Kidney (tissue), 22 donors: ENCODE measurements at regions of chr16 and their contacts with region 1.

Region 1: DNA sequence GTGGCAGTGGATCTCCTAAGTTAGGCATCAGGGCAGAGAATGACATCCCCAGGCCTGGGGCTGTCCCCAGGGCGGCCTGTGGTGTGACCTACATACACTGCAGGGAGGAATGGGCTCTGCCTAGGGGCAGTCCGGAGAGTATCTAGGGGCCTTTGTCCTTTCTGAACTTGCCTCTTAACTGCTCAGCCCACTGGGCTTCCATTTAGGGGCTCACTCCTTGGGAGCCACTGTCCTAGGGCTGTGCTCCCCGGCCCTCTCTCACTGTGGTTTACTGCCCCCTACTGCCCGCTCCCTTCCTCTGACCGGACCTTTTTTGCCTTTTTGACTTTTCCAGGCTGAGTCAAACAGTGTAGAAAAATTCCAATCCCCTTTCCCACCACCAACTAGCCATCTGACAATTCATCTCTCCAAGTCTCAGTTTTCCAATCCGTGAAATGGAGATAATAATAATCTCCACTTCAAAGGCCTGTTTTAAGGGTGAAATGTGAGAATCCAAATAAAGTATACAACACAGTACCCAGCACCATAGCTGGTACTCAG is 66.8 kb downstream of the DNAH3 start:
- DNase-seq: peak; percentile 54 to 73 (median 64)
- H3K4me3 ChIP-seq: no peak overlapping the region
- H3K27ac ChIP-seq: no peak overlapping the region
- H3K4me1 ChIP-seq: no peaks in the 10 kb centered on the region
- H3K27me3 ChIP-seq: no peaks in the 10 kb centered on the region
- CTCF ChIP-seq: peak; percentile 61

Region 2: GRCh38 chr16:20791923-20792612 is 291.7 kb before region 1 on chr16:
- intact Hi-C with region 1: no loop called
- DNase-seq: no peak
- H3K4me3 ChIP-seq: no peak overlapping the region
- H3K27ac ChIP-seq: no peak overlapping the region
- H3K4me1 ChIP-seq: no peaks in the 10 kb centered on the region
- H3K27me3 ChIP-seq: no peaks in the 10 kb centered on the region
- CTCF ChIP-seq: no peak

Region 3: GRCh38 chr16:20849587-20850390 is 234.0 kb before region 1 on chr16:
- intact Hi-C with region 1: loop called (anchors 5 kb)
- DNase-seq: peak; percentile 69 to 84 (median 77)
- H3K4me3 ChIP-seq: no peak overlapping the region
- H3K27ac ChIP-seq: no peak overlapping the region
- H3K4me1 ChIP-seq: peaks cover 0 to 14% (median 11%) of the 10 kb centered on the region in 3 donors
- H3K27me3 ChIP-seq: no peaks in the 10 kb centered on the region
- CTCF ChIP-seq: peak; percentile 98